ENCODE measurements at regions of chr1 and their contacts with region 1.

Region 1: DNA sequence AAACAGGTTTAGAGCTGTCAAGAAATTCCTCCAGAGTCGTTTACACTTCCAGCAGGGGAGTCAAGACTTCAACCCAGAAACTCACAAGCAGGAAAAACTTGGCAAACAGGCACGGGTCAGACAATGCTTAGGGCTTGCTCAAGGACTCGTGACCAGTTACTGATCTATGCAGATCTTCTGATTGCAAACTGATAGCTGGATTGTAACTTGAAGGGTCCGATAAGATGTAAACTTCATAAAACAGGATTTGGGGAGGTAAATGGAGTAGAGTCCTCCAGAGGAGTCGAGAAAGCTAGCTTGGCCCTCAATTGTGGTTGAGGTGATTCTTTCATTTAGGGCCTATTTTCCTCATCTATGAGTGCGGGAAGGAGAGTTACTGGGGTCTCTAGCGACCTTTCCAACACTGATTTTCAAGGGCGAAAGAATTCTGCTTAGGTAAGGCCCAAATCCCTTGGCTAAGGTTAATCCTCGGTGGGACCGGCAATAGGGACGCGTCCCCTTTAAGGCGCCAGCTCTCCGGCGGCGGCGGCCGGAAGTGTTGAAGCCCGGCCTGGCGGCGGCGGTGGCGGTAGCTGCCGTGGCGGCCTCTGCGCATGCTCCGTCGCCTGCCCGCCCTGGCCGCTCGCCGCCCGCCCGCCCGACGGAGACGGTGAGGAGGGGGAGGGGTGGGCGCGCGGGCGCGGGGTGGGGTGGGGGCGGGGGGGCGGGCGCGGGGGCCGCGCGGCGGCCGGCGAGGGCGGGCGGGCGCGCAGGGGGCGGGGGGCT is at the start of gene GMEB1:
- DNase-seq: peak; percentile 71 to 89 (median 82)
- H3K4me3 ChIP-seq: peak within 1 kb of the TSS; percentile 77 to 100 (median 99)
- H3K4me3 Mint-ChIP-seq: peak within 1 kb of the TSS; percentile 84 to 98
- H3K27ac ChIP-seq: peak within 1 kb of the TSS; percentile 99 to 100
- H3K27ac Mint-ChIP-seq: peak within 1 kb of the TSS; percentile 92 to 98 (median 96)
- H3K4me1 ChIP-seq: peaks cover 27 to 34% of the 10 kb centered on the region in 2 donors
- H3K4me1 Mint-ChIP-seq: peaks cover 18% of the 10 kb centered on the region
- H3K27me3 ChIP-seq: no peaks in the 10 kb centered on the region
- H3K27me3 Mint-ChIP-seq: no peaks in the 10 kb centered on the region
- CTCF ChIP-seq: no peak
- polyA plus RNA-seq, gene GMEB1: 8.1 to 16.0 (median 9.7) TPM

Region 2: DNA sequence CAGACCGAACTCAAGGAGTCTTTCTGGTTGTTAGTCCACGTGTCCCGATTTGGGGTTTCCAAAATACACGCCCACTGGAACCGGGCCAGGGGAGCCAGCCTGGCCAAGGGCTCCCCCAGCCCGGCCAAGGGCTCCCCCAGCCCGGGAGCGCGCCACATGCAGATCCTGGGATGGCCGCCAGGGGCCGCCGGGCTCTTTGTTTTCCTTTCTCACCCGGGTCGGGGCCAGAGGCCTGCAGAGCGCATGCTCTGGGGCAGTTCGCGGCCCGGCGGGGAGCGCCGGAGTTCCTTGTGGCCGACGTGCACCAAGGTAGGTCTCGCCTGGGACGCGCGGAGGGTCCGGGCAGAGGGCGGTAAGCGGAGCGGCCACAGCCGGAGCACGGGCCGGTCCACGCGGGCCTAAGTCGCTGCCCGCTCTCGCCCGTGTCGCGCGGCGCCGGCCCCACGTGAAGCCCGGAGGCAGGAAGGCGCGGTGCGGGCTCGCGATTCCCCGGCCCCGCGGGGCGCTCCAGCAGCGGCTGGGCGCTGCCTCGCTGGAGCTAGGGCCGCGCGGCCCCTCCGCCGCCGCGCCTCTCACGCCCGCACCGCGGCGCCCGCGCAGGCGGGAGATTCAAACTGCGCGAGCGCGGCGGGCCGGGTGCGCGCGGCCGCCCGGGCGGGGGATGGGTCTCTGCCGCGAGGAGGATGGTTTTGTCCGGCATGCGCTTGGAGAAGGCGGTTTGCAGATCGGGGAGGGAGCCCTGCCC is 150.2 kb before region 1 on chr1:
- intact Hi-C with region 1: no loop called
- DNase-seq: peak; percentile 80 to 87 (median 81)
- H3K4me3 ChIP-seq: peak overlapping the region; percentile 57 to 88 (median 60)
- H3K4me3 Mint-ChIP-seq: peak overlapping the region; percentile 88 to 89
- H3K27ac ChIP-seq: peak overlapping the region; percentile 16 to 59
- H3K27ac Mint-ChIP-seq: peak overlapping the region; percentile 78 to 94 (median 86)
- H3K4me1 ChIP-seq: peaks cover 15 to 17% of the 10 kb centered on the region in 2 donors
- H3K4me1 Mint-ChIP-seq: peaks cover 23% of the 10 kb centered on the region
- H3K27me3 ChIP-seq: no peaks in the 10 kb centered on the region
- H3K27me3 Mint-ChIP-seq: peaks cover 0 to 2% (median 2%) of the 10 kb centered on the region in 3 donors
- CTCF ChIP-seq: peak; percentile 100

Region 3: GRCh38 chr1:28648474-28649198 is 19.7 kb before region 1 on chr1 and contains the start of gene RNU11:
- intact Hi-C with region 1: loop called in 1 of 2 experiments (anchors 2 kb)
- DNase-seq: peak; percentile 96 to 98 (median 96)
- H3K4me3 ChIP-seq: peak within 1 kb of the TSS; percentile 17 to 65 (median 33)
- H3K4me3 Mint-ChIP-seq: peak within 1 kb of the TSS; percentile 75 to 93
- H3K27ac ChIP-seq: peak within 1 kb of the TSS; percentile 80 to 97
- H3K27ac Mint-ChIP-seq: peak within 1 kb of the TSS; percentile 94 to 100 (median 99)
- H3K4me1 ChIP-seq: peaks cover 36 to 48% of the 10 kb centered on the region in 2 donors
- H3K4me1 Mint-ChIP-seq: peaks cover 43% of the 10 kb centered on the region
- H3K27me3 ChIP-seq: no peaks in the 10 kb centered on the region
- H3K27me3 Mint-ChIP-seq: peaks cover 0 to 2% (median 0%) of the 10 kb centered on the region in 3 donors
- CTCF ChIP-seq: no peak
- polyA plus RNA-seq, gene RNU11: not detected

Measured in CD14-positive monocyte (primary cell).